T-cell (primary cell): ENCODE measurements at regions of chr1 and their contacts with region 1.

Region 1: GRCh38 chr1:24847995-24848881 is 81.8 kb downstream of the RUNX3 start:
- DNase-seq: peak; percentile 79 to 94 (median 86)
- ATAC-seq: peak; percentile 94 to 97 (median 96)
- H3K4me3 ChIP-seq: peak overlapping the region; percentile 49 to 51
- H3K4me3 Mint-ChIP-seq: peak overlapping the region; percentile 57 to 74 (median 71)
- H3K27ac ChIP-seq: peak overlapping the region; percentile 65
- H3K27ac Mint-ChIP-seq: peak overlapping the region; percentile 58 to 74
- H3K4me1 ChIP-seq: peaks cover 2 to 28% of the 10 kb centered on the region in 2 experiments
- H3K4me1 Mint-ChIP-seq: peaks cover 14 to 18% (median 18%) of the 10 kb centered on the region in 3 donors
- H3K27me3 ChIP-seq: no peaks in the 10 kb centered on the region
- H3K27me3 Mint-ChIP-seq: no peaks in the 10 kb centered on the region

Region 2: DNA sequence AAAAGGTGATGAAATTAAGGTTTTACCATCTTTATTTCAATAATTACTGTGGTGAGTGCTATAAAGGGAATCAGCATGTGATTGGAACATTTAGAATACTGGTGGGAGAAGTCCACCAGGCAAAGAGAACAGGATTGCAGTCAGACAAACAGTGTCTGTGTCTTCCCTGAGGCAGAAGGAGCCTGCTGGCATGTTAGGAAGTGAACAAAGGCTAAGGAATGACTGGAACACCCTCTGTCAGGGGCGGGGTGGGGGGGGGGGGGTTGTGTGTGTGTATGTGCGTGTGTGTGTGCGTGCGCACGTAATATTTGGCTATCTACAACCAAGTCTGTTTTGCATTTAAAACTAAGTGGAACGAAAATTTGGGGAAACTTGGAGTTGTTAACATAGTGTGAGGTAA is 174.9 kb before region 1 on chr1:
- CTCF ChIA-PET with region 1: no interaction called
- POLR2A ChIA-PET with region 1: no interaction called
- DNase-seq: no peak
- ATAC-seq: no peak
- H3K4me3 ChIP-seq: no peak overlapping the region
- H3K4me3 Mint-ChIP-seq: no peak overlapping the region
- H3K27ac ChIP-seq: no peak overlapping the region
- H3K27ac Mint-ChIP-seq: peak overlapping the region in 1 of 2 donors; percentile 25
- H3K4me1 ChIP-seq: no peaks in the 10 kb centered on the region
- H3K4me1 Mint-ChIP-seq: peaks cover 0 to 2% (median 0%) of the 10 kb centered on the region in 3 donors
- H3K27me3 ChIP-seq: no peaks in the 10 kb centered on the region
- H3K27me3 Mint-ChIP-seq: no peaks in the 10 kb centered on the region

Region 3: GRCh38 chr1:24735509-24736375 is 112.5 kb before region 1 on chr1:
- CTCF ChIA-PET with region 1: no interaction called
- POLR2A ChIA-PET with region 1: no interaction called
- DNase-seq: no peak
- ATAC-seq: no peak
- H3K4me3 ChIP-seq: no peak overlapping the region
- H3K4me3 Mint-ChIP-seq: no peak overlapping the region
- H3K27ac ChIP-seq: no peak overlapping the region
- H3K27ac Mint-ChIP-seq: no peak overlapping the region
- H3K4me1 ChIP-seq: peaks cover 0 to 3% of the 10 kb centered on the region in 2 experiments
- H3K4me1 Mint-ChIP-seq: peaks cover 0 to 9% (median 6%) of the 10 kb centered on the region in 3 donors
- H3K27me3 ChIP-seq: peaks cover 0 to 3% of the 10 kb centered on the region in 2 experiments
- H3K27me3 Mint-ChIP-seq: no peaks in the 10 kb centered on the region

Region 4: DNA sequence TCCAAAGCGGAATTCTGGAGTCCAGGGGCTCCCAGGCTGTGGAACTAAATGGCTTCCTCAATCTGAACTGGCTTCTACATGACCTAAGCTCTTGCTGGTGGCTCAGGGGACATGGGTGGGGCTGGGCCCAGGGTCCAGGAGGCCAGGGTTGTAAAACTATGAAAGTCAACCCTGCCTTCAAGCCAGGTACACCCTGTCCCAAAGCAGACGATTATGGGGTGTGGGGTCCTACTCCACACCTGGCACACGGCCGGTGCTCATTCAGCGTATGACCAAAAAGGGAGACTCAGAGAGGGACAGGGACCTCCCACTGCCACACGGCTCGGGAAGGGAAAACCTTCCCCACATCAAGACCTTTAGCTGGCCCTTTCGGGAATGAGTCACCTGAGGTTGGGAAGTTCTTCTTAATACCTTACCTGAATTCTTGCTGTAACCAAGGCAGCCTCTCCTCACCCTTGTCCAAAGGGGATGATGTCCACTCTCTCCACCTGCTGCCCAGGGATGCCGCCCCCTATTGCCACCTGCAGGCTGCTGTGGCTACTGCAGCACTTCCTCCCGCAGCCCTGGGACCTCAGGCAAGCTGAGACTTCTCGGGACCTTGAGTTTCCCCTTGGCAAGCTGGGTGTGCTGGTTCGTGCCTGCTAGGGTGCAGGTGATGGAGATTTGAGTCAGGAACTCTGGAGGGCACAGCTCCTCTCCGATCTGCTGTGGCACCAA is 49.7 kb after region 1 on chr1:
- CTCF ChIA-PET with region 1: interaction called in 1 of 2 experiments, 10 read pairs
- POLR2A ChIA-PET with region 1: no interaction called
- DNase-seq: peak in 20 of 35 experiments; percentile 27 to 70 (median 39)
- ATAC-seq: peak; percentile 48 to 59 (median 55)
- H3K4me3 ChIP-seq: no peak overlapping the region
- H3K4me3 Mint-ChIP-seq: no peak overlapping the region
- H3K27ac ChIP-seq: peak overlapping the region; percentile 18
- H3K27ac Mint-ChIP-seq: peak overlapping the region; percentile 36 to 48
- H3K4me1 ChIP-seq: peaks cover 0 to 62% of the 10 kb centered on the region in 2 experiments
- H3K4me1 Mint-ChIP-seq: peaks cover 30 to 41% (median 35%) of the 10 kb centered on the region in 3 donors
- H3K27me3 ChIP-seq: no peaks in the 10 kb centered on the region
- H3K27me3 Mint-ChIP-seq: no peaks in the 10 kb centered on the region

Region 5: GRCh38 chr1:24923485-24924113 is 75.4 kb after region 1 on chr1:
- CTCF ChIA-PET with region 1: interaction called in 1 of 2 experiments, 19 read pairs
- POLR2A ChIA-PET with region 1: interaction called in 1 of 2 experiments, 11 read pairs
- DNase-seq: peak in 17 of 35 experiments; percentile 25 to 63 (median 44)
- ATAC-seq: no peak
- H3K4me3 ChIP-seq: peak overlapping the region in 1 of 2 donors; percentile 22
- H3K4me3 Mint-ChIP-seq: peak overlapping the region; percentile 37 to 98 (median 54)
- H3K27ac ChIP-seq: peak overlapping the region; percentile 96
- H3K27ac Mint-ChIP-seq: peak overlapping the region; percentile 84 to 86
- H3K4me1 ChIP-seq: peaks cover 41 to 93% of the 10 kb centered on the region in 2 experiments
- H3K4me1 Mint-ChIP-seq: peaks cover 61 to 89% (median 81%) of the 10 kb centered on the region in 3 donors
- H3K27me3 ChIP-seq: no peaks in the 10 kb centered on the region
- H3K27me3 Mint-ChIP-seq: no peaks in the 10 kb centered on the region

Region 6: DNA sequence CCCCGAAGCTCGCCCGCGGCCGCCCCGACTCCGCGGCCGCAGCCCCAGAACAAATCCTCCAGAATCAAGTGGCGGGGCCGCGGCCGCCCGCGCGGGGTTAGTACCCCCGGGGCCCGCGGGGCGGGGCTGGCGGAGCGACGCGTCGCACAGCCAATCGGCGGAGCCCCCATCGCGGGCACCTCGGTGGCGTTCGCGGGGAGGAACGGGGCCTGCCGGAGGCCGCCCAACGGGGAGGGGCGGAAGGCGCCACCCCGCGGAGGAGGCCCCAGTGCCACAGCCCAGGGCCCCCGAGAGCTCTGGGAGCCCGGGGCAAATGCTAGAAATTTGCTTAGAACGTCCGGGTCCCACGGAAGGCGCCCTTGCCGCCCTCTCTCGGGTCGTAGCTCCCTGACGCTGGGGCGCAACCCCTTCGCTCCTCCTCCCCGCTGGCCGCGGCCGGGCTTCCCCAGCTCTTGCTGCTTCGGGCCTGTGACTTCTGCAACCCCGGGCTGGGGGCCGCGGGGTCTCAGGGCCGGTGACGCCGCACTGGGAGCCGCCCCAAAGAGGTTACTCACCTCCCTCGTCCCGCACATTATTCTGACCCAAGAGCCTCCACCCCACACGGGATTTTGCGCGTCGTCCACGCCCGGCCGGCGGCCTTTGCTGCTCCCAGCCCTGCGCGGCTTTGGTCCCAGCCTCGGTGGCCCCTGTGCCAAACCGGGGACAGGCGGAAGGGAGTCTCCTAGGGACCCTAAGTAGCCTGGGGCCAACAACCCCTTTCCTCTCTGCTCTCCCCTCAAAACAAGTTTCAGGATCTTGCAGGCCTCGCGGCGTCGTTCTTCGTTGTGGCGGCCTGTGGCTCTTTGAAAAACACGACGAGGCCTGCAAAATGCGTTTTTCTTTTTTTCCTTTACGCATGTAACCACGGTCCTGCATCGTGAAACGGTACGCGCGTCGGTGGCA is 82.2 kb after region 1 on chr1 and contains the start of gene RUNX3:
- CTCF ChIA-PET with region 1: interaction called in 1 of 2 experiments, 19 read pairs
- POLR2A ChIA-PET with region 1: no interaction called
- DNase-seq: peak; percentile 85 to 96 (median 92)
- ATAC-seq: peak; percentile 80 to 87 (median 82)
- H3K4me3 ChIP-seq: peak within 1 kb of the TSS; percentile 87 to 97
- H3K4me3 Mint-ChIP-seq: peak within 1 kb of the TSS; percentile 96 to 98 (median 98)
- H3K27ac ChIP-seq: peak within 1 kb of the TSS; percentile 96
- H3K27ac Mint-ChIP-seq: peak within 1 kb of the TSS; percentile 89 to 96
- H3K4me1 ChIP-seq: peaks cover 32 to 72% of the 10 kb centered on the region in 2 experiments
- H3K4me1 Mint-ChIP-seq: peaks cover 44 to 63% (median 62%) of the 10 kb centered on the region in 3 donors
- H3K27me3 ChIP-seq: peaks cover 0 to 5% of the 10 kb centered on the region in 2 experiments
- H3K27me3 Mint-ChIP-seq: no peaks in the 10 kb centered on the region
- total RNA-seq, gene RUNX3: 140 to 220 (median 145) TPM